ENCODE measurements at regions of chr10 and their contacts with region 1.

Region 1: DNA sequence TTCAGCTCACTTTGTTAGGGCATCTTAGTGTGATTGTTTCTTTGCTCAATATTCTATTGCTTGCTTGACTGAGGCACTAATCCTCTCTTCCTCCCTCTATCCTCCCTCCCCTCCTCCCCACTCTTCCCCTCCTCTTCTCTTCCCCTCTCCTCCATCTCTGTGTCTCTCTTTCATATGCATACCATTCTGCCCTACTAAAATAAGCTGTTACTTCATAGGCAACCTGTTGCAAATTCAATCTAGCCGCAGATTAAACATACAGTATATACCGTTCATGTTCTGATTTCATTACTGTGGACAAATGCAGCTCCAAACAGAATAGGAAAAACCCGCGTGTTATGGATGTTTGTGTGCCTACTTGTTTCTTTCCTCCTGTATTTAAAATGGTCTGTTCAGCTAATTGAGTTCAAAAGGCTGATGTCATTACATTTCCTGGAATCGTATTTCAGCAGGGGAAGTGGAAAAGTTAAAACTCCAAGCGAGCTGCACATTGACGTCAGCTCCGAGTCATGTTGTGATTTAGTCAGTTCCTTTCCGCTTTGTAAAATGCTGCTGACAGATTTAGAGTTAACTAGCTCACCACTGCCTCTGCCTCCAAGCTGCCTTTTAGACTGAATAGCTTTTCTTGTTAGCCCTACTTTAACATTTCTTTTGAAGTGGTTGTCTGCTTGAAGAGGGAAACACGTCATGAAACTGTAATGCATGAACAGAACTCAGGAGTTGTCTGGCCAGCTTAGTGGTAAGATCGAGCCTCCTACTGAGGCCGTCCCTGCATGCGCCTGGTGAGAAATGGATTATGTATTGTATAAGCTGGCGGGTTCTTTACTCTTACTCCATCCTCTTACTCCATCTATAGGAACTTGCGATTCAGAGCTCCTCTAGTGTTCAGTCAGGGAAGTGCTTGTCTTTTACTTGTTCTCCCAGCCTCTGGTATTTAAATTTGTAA is 69.0 kb downstream of the CREM start:
- DNase-seq: peak; percentile 86
- H3K4me3 Mint-ChIP-seq: peak overlapping the region; percentile 84
- H3K27ac Mint-ChIP-seq: peak overlapping the region; percentile 100
- H3K4me1 Mint-ChIP-seq: peaks cover 59% of the 10 kb centered on the region
- H3K27me3 Mint-ChIP-seq: no peaks in the 10 kb centered on the region

Region 2: DNA sequence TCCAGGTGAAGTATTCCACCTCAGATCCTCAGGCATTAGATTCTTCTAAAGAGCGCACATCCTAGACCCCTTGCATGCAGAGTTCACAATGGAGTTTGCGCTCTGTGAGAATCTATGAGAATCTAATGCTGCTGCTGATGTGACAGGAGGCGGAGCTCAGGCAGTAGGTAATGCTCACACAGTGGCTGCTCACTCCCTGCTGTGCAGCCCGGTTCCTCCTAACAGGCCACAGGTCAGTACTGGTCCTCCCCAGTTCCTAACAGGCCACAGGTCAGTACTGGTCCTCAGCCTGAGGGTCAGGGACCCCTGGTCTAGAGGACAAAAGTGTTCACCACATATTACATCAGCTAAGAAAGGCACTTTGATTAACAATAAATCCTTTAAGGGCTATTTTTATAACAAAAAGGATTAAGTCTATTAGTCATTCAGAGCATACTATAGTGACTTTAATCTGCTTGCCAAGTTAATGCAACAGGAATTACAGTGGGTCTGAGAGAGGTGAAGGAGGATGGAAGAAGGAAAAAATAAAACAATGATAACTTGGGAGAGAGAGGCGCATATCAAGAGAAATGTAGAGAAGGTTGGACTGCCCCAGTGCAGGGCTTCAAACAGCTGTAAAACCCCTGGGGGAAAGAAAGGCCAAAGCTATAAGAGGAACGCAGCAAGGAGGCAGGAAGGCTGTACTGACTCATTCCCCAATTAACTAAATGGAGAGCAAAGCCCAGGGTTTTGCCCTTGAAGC is 154.7 kb before region 1 on chr10:
- CTCF ChIA-PET with region 1: no interaction called
- POLR2A ChIA-PET with region 1: no interaction called
- DNase-seq: no peak
- H3K4me3 Mint-ChIP-seq: no peak overlapping the region
- H3K27ac Mint-ChIP-seq: no peak overlapping the region
- H3K4me1 Mint-ChIP-seq: peaks cover 5% of the 10 kb centered on the region
- H3K27me3 Mint-ChIP-seq: no peaks in the 10 kb centered on the region

Region 3: GRCh38 chr10:35126530-35127296 is 68.9 kb before region 1 on chr10 and contains the start of gene CREM:
- CTCF ChIA-PET with region 1: interaction called, 75 read pairs
- POLR2A ChIA-PET with region 1: interaction called, 39 read pairs
- DNase-seq: peak; percentile 100
- H3K4me3 Mint-ChIP-seq: peak within 1 kb of the TSS; percentile 80
- H3K27ac Mint-ChIP-seq: peak within 1 kb of the TSS; percentile 99
- H3K4me1 Mint-ChIP-seq: peaks cover 56% of the 10 kb centered on the region
- H3K27me3 Mint-ChIP-seq: no peaks in the 10 kb centered on the region
- total RNA-seq, gene CREM: 48.7 to 51.6 TPM

Region 4: GRCh38 chr10:35165136-35165535 is 30.5 kb before region 1 on chr10:
- CTCF ChIA-PET with region 1: interaction called, 10 read pairs
- POLR2A ChIA-PET with region 1: no interaction called
- DNase-seq: no peak
- H3K4me3 Mint-ChIP-seq: no peak overlapping the region
- H3K27ac Mint-ChIP-seq: no peak overlapping the region
- H3K4me1 Mint-ChIP-seq: no peaks in the 10 kb centered on the region
- H3K27me3 Mint-ChIP-seq: no peaks in the 10 kb centered on the region

Region 5: GRCh38 chr10:35178331-35178730 is 17.3 kb before region 1 on chr10:
- CTCF ChIA-PET with region 1: interaction called, 16 read pairs
- POLR2A ChIA-PET with region 1: no interaction called
- DNase-seq: no peak
- H3K4me3 Mint-ChIP-seq: no peak overlapping the region
- H3K27ac Mint-ChIP-seq: no peak overlapping the region
- H3K4me1 Mint-ChIP-seq: peaks cover 1% of the 10 kb centered on the region
- H3K27me3 Mint-ChIP-seq: no peaks in the 10 kb centered on the region

Region 6: DNA sequence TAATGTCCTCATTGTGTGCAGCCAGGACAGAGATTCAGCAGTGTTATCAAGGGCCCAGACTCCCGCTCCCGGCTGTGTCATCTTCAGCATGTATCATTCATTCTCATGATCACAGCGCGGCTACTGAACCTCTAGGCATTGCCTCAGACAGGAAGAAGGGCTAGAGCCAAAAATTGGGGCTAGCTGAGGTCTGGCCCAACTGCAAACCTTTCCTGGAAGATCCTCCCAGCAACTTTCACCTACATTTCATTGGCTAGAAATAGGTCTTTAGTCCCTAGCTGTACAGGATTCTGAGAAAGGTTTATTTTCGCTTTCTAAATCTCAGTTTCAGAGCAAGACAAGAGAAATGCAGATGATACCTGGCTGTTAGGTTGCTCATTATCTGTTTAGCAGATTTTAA is 12.9 kb after region 1 on chr10:
- CTCF ChIA-PET with region 1: interaction called, 130 read pairs
- POLR2A ChIA-PET with region 1: interaction called, 7 read pairs
- DNase-seq: peak; percentile 68
- H3K4me3 Mint-ChIP-seq: peak overlapping the region; percentile 45
- H3K27ac Mint-ChIP-seq: peak overlapping the region; percentile 91
- H3K4me1 Mint-ChIP-seq: peaks cover 66% of the 10 kb centered on the region
- H3K27me3 Mint-ChIP-seq: no peaks in the 10 kb centered on the region

Measured in activated CD4-positive, alpha-beta T cell treated with anti-CD3 and anti-CD28 coated beads, Interleukin-2, amount 10 ng/mL, durations not matched to agents 7 days and 5 days (primary cell).